Dorsolateral prefrontal cortex (tissue), 120 donors: ENCODE measurements at regions of chr5 and their contacts with region 1.

Region 1: DNA sequence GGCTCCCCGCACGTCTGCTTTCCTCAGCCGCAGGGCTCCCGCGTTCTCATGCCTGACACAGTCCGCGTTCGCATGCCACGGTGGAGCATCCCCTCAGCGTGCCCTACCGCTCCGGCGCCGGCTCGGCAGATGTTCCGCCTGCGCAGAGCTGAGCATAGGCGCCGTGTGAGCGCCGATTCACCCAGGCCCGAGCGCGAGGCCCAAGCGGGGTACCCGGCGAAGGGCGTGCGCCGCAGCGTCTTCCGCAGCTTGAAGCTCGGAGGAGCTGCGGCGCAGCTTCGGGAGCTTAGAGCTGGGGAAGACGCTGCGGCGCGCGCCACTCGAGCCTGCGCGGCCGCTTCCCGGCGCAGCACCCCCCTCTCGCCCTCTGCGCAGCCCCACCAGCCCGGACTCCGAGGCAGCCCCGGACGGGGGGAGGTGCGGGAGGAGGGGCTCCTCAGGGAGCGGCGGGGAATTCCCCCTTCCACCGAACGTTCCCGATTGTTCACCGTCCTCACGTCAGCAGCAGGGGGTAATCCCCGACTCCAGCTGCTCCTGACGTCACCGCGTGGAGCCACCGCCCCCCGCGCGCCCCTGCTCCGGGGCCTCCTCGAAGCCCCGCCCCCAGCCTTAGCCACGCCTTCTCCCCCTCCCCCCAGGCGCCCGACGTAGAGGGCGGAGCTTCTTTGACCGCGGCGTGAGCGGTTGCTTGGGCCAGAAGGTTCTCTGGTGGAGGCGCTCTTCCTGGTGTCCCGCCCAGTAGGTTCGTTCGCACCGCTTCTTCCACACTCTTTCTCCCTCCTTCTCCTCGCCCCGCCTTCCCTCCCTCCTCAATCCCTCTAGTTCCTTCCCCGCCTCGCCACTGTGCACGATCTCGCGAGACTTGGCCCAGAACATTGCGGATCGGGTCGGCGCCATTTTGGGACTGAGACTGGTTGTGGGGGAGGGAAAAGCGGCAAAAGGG is at the start of gene GPBP1:
- DNase-seq: peak; percentile 95 to 99 (median 97)
- H3K4me3 ChIP-seq: peak within 1 kb of the TSS; percentile 68 to 100 (median 92)
- H3K27ac ChIP-seq: peak within 1 kb of the TSS; percentile 92 to 100 (median 100)
- H3K27me3 ChIP-seq: no peaks in the 10 kb centered on the region
- CTCF ChIP-seq: peak in 24 of 56 donors; percentile 4 to 43 (median 16)
- total RNA-seq, gene GPBP1: 86.6 to 165 (median 112) TPM

Region 2: DNA sequence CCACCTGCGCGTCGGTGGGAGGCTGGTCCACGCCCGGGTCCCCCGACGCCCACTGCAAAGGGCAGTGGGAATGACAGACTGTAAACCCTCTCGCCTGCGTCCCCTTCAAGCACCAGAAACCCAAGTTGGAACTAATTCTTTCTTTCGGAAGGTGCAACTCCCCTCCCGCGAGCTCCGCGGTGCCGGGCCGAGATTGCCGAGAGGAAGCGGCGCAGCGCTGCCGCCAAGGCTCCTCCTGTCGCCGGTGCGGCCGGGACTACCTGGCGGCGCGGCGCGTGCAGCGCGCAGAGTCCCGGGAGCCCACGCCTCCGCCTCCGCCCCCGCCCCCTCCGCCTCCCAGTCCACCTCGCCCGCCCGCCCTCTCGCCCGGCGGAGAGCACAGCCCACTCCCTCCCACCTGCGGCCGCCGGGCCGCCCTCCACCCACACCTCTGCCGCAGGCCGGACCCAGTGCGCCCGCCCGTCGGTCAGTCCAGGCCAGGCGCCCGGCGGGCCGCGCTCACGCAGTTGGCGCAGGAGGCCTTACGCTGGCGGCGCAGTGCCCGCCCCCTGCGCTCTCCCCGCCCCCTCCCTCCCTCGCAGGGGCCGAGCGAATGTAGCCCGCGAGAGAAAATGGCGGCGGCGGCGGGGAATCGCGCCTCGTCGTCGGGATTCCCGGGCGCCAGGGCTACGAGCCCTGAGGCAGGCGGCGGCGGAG is 358.3 kb before region 1 on chr5 and contains the start of gene MAP3K1:
- intact Hi-C with region 1: loop called in 1 of 2 experiments (anchors 5 kb)
- DNase-seq: peak; percentile 50 to 84 (median 66)
- H3K4me3 ChIP-seq: peak within 1 kb of the TSS; percentile 62 to 97 (median 88)
- H3K27ac ChIP-seq: peak within 1 kb of the TSS; percentile 25 to 98 (median 87)
- H3K27me3 ChIP-seq: no peaks in the 10 kb centered on the region
- CTCF ChIP-seq: peak in 15 of 56 donors; percentile 1 to 31 (median 16)
- total RNA-seq, gene MAP3K1: 4.9 to 12.5 (median 7.8) TPM

Region 3: GRCh38 chr5:56909294-56910209 is 263.9 kb before region 1 on chr5 and contains the start of gene SETD9:
- intact Hi-C with region 1: loop called (anchors 1 kb)
- DNase-seq: peak; percentile 95 to 98 (median 96)
- H3K4me3 ChIP-seq: peak within 1 kb of the TSS; percentile 54 to 92 (median 78)
- H3K27ac ChIP-seq: peak within 1 kb of the TSS; percentile 67 to 99 (median 97)
- H3K27me3 ChIP-seq: no peaks in the 10 kb centered on the region
- CTCF ChIP-seq: peak in 21 of 56 donors; percentile 4 to 40 (median 18)
- total RNA-seq, gene SETD9: 1.8 to 16.2 (median 5.6) TPM

Region 4: GRCh38 chr5:56951946-56952691 is 221.3 kb before region 1 on chr5 and contains the start of gene MIER3:
- intact Hi-C with region 1: loop called (anchors 1 to 2 kb)
- DNase-seq: peak; percentile 53 to 88 (median 66)
- H3K4me3 ChIP-seq: peak within 1 kb of the TSS; percentile 65 to 98 (median 83)
- H3K27ac ChIP-seq: peak within 1 kb of the TSS; percentile 56 to 95 (median 86)
- H3K27me3 ChIP-seq: no peaks in the 10 kb centered on the region
- CTCF ChIP-seq: no peak
- total RNA-seq, gene MIER3: 13.7 to 33.5 (median 22.7) TPM

Region 5: GRCh38 chr5:57032151-57032551 is 141.3 kb before region 1 on chr5:
- intact Hi-C with region 1: loop called in 1 of 2 experiments (anchors 10 kb)
- DNase-seq: no peak
- H3K4me3 ChIP-seq: no peak overlapping the region
- H3K27ac ChIP-seq: no peak overlapping the region
- H3K27me3 ChIP-seq: peaks cover 0 to 8% (median 0%) of the 10 kb centered on the region in 45 donors
- CTCF ChIP-seq: no peak

Region 6: GRCh38 chr5:57221049-57221568 is 47.7 kb after region 1 on chr5:
- intact Hi-C with region 1: loop called in 1 of 2 experiments (anchors 2 kb)
- DNase-seq: no peak
- H3K4me3 ChIP-seq: no peak overlapping the region
- H3K27ac ChIP-seq: peak overlapping the region in 2 of 59 donors; percentile 5 to 11
- H3K27me3 ChIP-seq: no peaks in the 10 kb centered on the region
- CTCF ChIP-seq: peak; percentile 71 to 99 (median 90)

Region 7: GRCh38 chr5:57488215-57488955 is 314.9 kb after region 1 on chr5:
- intact Hi-C with region 1: no loop called
- DNase-seq: no peak
- H3K4me3 ChIP-seq: no peak overlapping the region
- H3K27ac ChIP-seq: no peak overlapping the region
- H3K27me3 ChIP-seq: no peaks in the 10 kb centered on the region
- CTCF ChIP-seq: no peak

Region 8: GRCh38 chr5:57642066-57642465 is 468.6 kb after region 1 on chr5:
- intact Hi-C with region 1: no loop called
- DNase-seq: no peak
- H3K4me3 ChIP-seq: no peak overlapping the region
- H3K27ac ChIP-seq: no peak overlapping the region
- H3K27me3 ChIP-seq: no peaks in the 10 kb centered on the region
- CTCF ChIP-seq: no peak